Pancreas (tissue), 10 donors: ENCODE measurements at regions of chr11 and their contacts with region 1.

Region 1: DNA sequence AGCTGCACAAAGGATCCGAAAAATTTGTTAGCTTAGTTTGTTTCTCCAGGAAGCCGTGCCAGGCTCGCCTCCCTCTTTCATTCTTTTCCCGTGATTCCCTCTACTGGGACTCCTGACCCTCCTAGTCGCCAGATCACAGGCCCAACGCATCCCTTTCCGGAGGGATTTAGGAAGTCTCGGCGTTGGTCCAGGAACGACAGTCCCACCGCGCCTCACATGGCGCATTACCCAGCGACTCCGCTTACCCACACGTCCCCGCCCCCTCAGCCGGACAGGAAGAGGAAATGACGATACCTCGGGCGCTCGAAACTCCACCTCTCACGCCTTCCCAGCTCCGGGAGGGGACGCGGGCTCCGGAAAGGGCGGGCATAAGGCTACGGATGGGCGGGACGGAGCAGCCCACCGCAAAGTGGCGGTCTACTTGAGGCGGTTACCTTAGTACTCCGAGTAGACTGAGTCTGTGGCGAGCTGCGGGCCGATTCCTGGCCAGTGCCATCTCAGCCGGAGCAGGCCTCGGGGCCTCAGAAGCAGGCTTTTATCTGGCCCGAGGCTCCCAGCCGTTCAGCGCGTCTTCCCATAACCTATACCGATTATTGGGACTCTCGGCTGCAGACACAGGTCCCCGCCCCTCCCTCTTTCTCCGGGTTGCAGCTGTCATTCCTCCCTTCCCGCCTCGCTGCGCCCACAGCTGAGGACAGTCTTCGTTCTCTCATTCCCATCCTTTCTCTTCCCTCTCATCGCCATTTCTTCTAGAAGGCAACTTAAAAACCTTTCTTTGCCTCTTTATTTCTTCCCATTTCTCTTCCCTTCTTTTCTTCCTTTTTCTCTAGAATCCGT is at the start of gene CCDC15:
- DNase-seq: peak; percentile 94 to 99 (median 95)
- ATAC-seq: peak; percentile 100
- H3K4me3 ChIP-seq: peak within 1 kb of the TSS; percentile 61 to 78 (median 70)
- H3K27ac ChIP-seq: peak within 1 kb of the TSS; percentile 39 to 71 (median 60)
- H3K4me1 ChIP-seq: no peaks in the 10 kb centered on the region
- H3K27me3 ChIP-seq: no peaks in the 10 kb centered on the region
- CTCF ChIP-seq: no peak
- total RNA-seq, gene CCDC15: 0.55 to 1.4 (median 0.76) TPM

Region 2: DNA sequence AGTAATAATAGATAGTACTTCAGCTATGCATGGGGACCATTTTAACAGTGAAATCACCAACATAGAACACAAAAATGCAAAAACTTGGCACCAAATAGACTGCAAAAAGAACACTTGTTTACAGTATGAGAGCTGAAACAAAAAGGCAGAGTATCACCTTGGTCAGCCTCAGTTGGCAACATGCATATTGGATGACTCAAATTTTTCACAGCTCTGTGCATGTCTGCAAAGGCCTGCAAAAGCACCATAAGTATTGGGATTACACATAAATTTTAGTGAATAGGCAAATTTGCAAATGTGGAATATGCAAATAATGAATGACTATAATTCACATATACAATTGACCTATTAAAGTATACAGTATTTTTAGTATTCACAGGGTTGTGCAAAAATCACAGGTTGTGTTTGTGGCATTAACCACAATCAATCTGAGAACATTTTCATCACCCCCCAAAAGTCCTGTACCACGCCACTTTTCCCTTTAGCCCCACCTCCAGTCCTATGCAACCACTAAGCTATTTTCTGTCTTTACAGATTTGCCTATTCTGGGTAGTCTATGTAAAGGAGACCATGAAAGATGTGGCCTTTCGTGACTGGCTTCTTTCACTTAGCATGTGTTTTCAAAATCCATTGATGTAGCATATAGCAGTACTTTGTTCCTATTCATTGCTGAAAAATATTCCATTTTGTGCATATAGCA is 47.3 kb after region 1 on chr11:
- intact Hi-C with region 1: no loop called
- DNase-seq: no peak
- ATAC-seq: no peak
- H3K4me3 ChIP-seq: no peak overlapping the region
- H3K27ac ChIP-seq: no peak overlapping the region
- H3K4me1 ChIP-seq: no peaks in the 10 kb centered on the region
- H3K27me3 ChIP-seq: no peaks in the 10 kb centered on the region
- CTCF ChIP-seq: no peak

Region 3: GRCh38 chr11:125111343-125112207 is 157.6 kb after region 1 on chr11 and contains the start of gene TMEM218:
- intact Hi-C with region 1: no loop called
- DNase-seq: peak; percentile 94 to 99 (median 99)
- ATAC-seq: peak; percentile 98 to 100 (median 100)
- H3K4me3 ChIP-seq: peak within 1 kb of the TSS; percentile 16 to 78 (median 66)
- H3K27ac ChIP-seq: peak within 1 kb of the TSS; percentile 10 to 73 (median 58)
- H3K4me1 ChIP-seq: peaks cover 0 to 7% (median 0%) of the 10 kb centered on the region in 3 donors
- H3K27me3 ChIP-seq: peaks cover 0 to 3% (median 0%) of the 10 kb centered on the region in 4 donors
- CTCF ChIP-seq: no peak
- total RNA-seq, gene TMEM218: 5.6 to 13.2 (median 9.9) TPM

Region 4: DNA sequence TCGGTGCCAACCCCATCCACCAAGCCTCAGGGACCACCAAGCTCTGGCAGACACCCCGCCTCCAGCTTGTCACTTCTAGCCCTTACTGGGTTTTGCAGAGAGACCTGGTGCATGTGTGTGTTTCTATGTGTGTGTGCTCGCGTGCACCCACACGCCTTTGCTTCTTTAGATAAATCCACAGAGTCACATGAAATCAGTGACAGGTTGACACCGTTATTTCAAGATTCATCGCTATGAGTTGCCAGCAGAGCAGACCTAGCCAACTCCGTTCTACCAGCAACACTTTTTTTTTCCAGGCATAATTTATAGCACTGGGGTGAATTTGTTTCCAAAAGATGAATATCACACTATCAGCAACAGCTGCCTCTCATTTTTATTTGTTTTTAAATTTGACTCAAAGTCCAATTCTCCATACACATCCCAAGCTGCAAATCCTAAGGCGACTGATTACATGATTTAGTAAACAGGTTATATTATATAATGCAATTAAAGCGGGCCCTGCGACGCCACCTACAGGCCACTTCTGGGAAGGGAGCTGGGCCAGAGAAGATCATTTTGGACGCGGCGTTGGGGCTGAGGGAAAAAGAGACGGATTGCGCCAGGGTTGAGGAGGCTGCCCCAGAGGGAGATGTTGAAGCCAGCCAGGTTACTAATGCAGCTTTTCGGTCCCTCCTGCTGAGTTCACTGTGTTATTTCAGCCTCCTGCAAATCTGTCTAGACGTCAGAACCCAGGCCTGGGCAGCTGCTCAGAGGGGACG is 391.6 kb after region 1 on chr11:
- intact Hi-C with region 1: loop called in 1 of 3 experiments (anchors 10 kb)
- DNase-seq: peak; percentile 51 to 88 (median 76)
- ATAC-seq: peak; percentile 85 to 91 (median 86)
- H3K4me3 ChIP-seq: no peak overlapping the region
- H3K27ac ChIP-seq: no peak overlapping the region
- H3K4me1 ChIP-seq: peaks cover 0 to 4% (median 3%) of the 10 kb centered on the region in 3 donors
- H3K27me3 ChIP-seq: no peaks in the 10 kb centered on the region
- CTCF ChIP-seq: peak; percentile 58 to 90 (median 88)